ENCODE measurements at regions of chr6 and their contacts with region 1.

Region 1: DNA sequence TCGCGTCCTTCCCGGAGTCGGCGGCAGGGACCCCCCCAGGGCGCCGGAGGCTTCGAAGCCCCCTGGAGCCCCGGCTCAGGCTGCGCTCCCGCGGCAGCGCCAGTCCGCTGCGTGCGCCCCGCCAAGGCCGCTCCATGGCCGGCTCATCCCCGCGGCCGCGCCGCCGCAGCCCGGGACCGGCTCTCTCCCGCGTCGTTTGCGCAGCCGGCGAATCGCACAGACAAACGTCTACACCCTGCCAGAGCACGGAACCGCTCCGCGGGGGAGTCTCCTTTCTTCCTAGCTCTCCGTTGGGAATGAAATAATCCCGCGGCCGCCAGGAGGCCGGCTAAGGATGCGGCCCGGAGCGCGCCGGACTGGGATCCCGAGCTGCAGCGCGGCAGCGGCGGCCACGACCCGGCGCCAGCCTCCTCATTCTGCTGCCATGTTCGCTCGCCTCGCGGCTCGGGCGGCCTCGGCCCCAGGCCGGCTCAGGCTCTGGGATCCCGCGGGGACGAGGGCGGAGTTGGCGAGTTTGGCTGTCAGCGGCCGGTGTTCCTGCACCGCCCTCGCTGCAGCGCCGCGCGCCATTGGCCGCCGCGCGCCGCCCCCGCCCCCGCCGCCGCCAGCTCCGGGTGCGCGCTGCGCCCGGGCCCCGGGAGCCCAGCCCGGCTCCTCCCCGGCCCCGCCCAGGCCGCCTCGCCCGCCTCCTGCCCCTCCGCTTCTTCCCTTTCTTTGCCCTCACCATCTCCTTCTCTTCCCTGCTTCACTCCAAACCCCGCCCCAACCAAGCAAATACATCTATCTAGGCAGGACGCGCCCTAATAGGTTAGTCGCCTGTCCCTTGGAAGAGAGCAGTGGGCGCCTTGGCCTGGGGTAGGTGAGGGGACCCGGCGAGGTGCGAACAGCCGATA is at the start of gene GFOD1:
- DNase-seq: peak; percentile 85
- H3K4me3 ChIP-seq: peak within 1 kb of the TSS; percentile 66 to 73 (median 70)
- H3K27ac ChIP-seq: peak within 1 kb of the TSS; percentile 61
- H3K4me1 ChIP-seq: peaks cover 22% of the 10 kb centered on the region
- H3K27me3 ChIP-seq: no peaks in the 10 kb centered on the region
- CTCF ChIP-seq: peak in 1 of 2 donors; percentile 35
- total RNA-seq, gene GFOD1: 12.3 to 37.3 TPM

Region 2: GRCh38 chr6:13383328-13384163 is 103.8 kb before region 1 on chr6:
- CTCF ChIA-PET with region 1: no interaction called
- dilution Hi-C with region 1: no loop called
- in situ Hi-C with region 1: no loop called
- intact Hi-C with region 1: loop called (anchors 1 kb)
- DNase-seq: peak; percentile 69
- H3K4me3 ChIP-seq: no peak overlapping the region
- H3K27ac ChIP-seq: peak overlapping the region; percentile 29
- H3K4me1 ChIP-seq: no peaks in the 10 kb centered on the region
- H3K27me3 ChIP-seq: no peaks in the 10 kb centered on the region
- CTCF ChIP-seq: peak in 1 of 2 donors; percentile 42

Region 3: DNA sequence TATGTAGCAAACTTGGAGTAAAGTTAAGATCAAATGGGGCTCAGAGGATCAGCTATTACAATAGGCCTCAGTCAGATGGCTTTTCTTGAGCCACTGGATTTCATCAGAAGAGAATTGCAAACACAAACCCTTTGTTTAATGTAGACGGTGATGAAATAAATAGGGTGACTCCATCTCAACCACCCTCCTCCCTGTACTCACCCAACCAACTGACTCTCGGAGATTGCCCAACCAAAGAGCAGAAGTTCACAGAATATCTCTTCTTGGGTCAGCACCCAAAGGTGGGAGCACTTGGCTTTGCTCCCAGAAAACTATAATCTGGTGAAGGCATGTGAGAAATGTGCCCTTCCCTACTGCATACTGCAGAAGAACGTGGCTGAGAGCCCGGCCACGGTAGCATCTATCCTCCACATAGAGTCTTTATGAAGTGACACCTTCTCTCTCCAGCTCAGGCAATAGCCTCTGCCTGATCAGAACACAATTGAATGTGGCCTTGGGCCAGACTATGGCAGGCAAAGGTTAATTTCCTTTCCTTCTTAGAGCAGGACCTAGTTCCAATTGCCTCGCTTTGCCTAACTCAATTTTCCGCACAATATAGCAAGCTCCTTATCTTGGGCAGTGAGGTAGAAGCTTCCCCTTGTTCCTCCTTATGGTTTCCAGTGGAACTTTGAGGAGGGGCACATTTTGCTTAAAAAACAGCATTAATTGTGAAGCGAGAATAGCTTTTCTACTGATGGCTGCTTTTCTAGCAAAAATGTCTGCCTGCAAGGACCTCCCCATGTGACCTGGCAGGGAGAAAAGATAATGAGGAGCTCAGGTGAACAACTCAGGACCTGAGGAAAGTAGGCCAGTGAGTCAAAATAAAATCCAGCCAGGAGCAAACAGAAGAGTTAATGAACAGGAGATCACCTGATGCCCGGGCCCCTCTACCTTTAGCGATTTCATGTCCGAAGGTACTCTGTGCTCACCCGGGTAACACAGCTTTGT is 79.4 kb before region 1 on chr6:
- CTCF ChIA-PET with region 1: interaction called, 3 read pairs
- dilution Hi-C with region 1: no loop called
- in situ Hi-C with region 1: no loop called
- intact Hi-C with region 1: loop called (anchors 2 kb)
- DNase-seq: peak; percentile 99
- H3K4me3 ChIP-seq: no peak overlapping the region
- H3K27ac ChIP-seq: peak overlapping the region; percentile 96
- H3K4me1 ChIP-seq: peaks cover 32% of the 10 kb centered on the region
- H3K27me3 ChIP-seq: no peaks in the 10 kb centered on the region
- CTCF ChIP-seq: no peak

Region 4: DNA sequence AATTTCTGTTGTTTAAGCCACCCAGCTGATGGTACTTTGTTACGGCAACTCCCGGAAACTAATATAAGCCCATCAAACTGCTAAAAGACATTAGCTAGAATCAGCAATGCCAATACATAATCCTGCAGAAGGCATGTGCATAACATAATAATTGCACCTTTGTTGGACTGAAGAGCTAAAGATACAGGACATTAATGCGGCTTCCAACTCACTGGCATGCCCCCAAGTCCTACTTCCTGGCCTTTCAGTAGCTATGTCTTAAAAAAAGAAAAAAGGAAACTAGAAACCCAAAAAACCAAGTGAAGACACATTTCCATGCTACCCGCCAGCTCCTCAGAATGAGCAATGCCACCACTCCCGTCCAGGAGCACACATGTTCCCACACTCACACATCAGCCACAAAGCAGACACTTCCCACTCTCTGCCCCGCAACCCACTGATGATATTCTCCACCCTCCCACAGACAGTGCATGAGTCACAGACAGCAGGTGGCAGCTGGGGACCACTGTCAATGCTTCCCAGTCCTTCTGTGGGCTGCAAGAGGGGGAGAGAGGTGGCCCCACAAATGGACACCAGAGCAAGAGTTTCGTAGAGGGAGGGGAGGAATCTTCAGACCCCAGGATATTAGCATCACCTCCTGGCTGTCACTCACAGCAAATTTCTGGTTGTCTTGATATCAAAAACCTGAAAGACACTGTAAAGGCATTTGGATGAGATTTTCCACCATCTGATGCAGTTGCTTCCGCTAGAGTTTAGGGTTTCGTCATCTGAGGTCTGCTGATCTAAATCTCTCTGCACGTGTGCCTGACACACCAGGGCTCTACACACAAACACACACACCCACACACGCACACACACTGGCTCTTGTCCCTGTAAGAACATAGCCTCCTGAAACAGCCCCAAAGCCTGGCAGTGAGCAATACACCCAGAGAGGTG is 32.8 kb before region 1 on chr6:
- CTCF ChIA-PET with region 1: interaction called, 3 read pairs
- dilution Hi-C with region 1: no loop called
- in situ Hi-C with region 1: no loop called
- intact Hi-C with region 1: loop called (anchors 1 kb)
- DNase-seq: peak; percentile 25
- H3K4me3 ChIP-seq: no peak overlapping the region
- H3K27ac ChIP-seq: peak overlapping the region; percentile 17
- H3K4me1 ChIP-seq: peaks cover 26% of the 10 kb centered on the region
- H3K27me3 ChIP-seq: no peaks in the 10 kb centered on the region
- CTCF ChIP-seq: no peak

Region 5: GRCh38 chr6:13574149-13574570 is 86.8 kb after region 1 on chr6:
- CTCF ChIA-PET with region 1: interaction called, 8 read pairs
- dilution Hi-C with region 1: no loop called
- in situ Hi-C with region 1: no loop called
- intact Hi-C with region 1: loop called (anchors 1 kb)
- DNase-seq: peak; percentile 92
- H3K4me3 ChIP-seq: peak overlapping the region; percentile 61 to 92 (median 77)
- H3K27ac ChIP-seq: peak overlapping the region; percentile 92
- H3K4me1 ChIP-seq: peaks cover 9% of the 10 kb centered on the region
- H3K27me3 ChIP-seq: no peaks in the 10 kb centered on the region
- CTCF ChIP-seq: peak; percentile 15 to 55

Region 6: DNA sequence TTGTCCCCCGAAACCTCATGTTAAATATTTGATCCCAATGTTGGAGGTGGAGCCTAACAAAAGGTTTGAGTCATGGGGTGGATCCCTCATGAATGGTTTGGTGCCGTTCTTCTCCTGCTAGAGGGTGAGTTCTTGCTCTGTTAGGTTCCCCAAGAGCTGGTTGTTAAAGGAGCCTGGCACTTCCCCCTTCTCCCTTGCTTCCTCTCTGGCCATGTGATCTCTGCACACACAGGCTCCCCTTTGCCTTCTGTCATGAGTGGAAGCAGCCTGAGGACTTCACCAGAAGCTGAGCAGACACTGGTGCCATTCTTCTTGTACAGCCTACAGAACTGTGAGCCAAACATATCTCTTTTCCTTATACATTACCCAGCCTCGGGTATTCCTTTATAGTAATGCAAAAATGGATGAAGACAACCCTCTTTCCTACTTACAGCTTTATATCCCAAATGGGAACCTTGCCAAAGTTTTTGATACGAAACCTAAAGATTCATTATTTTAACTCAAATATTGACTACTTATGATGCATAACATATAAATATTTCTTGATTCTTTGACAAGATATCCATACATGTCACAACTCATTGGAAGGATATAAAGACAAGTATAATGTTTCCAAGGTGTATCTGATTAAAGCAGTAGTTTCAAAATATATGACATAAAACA is 498.4 kb after region 1 on chr6:
- CTCF ChIA-PET with region 1: no interaction called
- dilution Hi-C with region 1: no loop called
- in situ Hi-C with region 1: no loop called
- intact Hi-C with region 1: no loop called
- DNase-seq: no peak
- H3K4me3 ChIP-seq: no peak overlapping the region
- H3K27ac ChIP-seq: no peak overlapping the region
- H3K4me1 ChIP-seq: no peaks in the 10 kb centered on the region
- H3K27me3 ChIP-seq: no peaks in the 10 kb centered on the region
- CTCF ChIP-seq: no peak